Naive thymus-derived CD4-positive, alpha-beta T cell (primary cell): ENCODE measurements at regions of chr12 and their contacts with region 1.

Region 1: DNA sequence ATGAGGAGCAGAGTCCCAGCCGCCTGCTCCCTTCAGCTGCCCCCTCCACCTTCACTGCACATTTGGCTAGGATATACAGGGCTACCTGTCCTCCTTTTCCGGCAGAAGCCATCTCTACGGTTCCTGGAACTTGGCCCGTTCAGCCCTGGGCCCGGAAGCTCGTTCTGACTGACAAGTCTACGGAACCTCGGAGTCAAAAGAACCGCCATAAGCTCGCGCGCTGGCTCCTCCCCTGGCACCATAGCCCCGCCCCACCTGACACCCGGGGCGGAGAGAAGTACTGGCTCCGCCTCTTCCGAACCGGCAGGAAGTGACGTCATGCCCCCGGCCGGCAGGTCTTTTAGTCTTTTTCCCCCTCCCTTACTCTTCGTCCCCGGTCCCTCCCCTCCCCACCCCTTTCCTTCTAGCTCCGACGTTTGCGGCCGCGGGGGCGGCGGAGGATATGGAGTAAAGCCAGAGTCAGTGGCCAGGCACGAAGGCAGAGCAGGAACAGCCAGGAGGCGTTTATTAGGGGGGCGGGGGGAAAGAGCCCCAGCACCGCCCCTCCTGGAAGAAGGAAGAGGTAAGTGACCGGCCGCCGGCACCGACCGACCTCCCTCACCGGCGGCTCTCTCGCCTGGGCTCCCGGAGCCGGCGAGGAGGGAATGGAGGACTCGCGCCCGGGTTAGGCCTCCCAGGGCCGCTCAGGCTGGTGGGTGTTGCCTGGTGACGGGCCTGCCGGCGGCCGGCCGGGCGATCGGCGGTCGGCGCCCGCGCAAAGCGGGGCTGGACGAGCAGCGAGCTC is at the starts of genes DEPDC4 and SCYL2:
- DNase-seq: peak; percentile 94 to 99 (median 97)
- ATAC-seq: peak; percentile 95
- H3K4me3 ChIP-seq: peak within 1 kb of the TSS; percentile 98
- H3K4me3 Mint-ChIP-seq: peak within 1 kb of the TSS; percentile 94 to 100 (median 98)
- H3K27ac ChIP-seq: peak within 1 kb of the TSS; percentile 96
- H3K27ac Mint-ChIP-seq: peak within 1 kb of the TSS; percentile 89 to 100 (median 98)
- H3K4me1 ChIP-seq: peaks cover 11 to 19% of the 10 kb centered on the region in 2 donors
- H3K4me1 Mint-ChIP-seq: peaks cover 18 to 54% (median 33%) of the 10 kb centered on the region in 7 donors
- H3K27me3 ChIP-seq: no peaks in the 10 kb centered on the region
- H3K27me3 Mint-ChIP-seq: no peaks in the 10 kb centered on the region
- total RNA-seq, gene DEPDC4: 0.74 to 1.3 (median 0.92) TPM
- total RNA-seq, gene SCYL2: 32.6 to 49.4 (median 42.3) TPM

Region 2: GRCh38 chr12:100200463-100201181 is 66.4 kb before region 1 on chr12 and contains the start of gene ACTR6:
- CTCF ChIA-PET with region 1: no interaction called
- POLR2A ChIA-PET with region 1: interaction called, 23 read pairs
- intact Hi-C with region 1: loop called (anchors 1 kb)
- DNase-seq: peak; percentile 91 to 99 (median 97)
- ATAC-seq: peak; percentile 93
- H3K4me3 ChIP-seq: peak within 1 kb of the TSS; percentile 84
- H3K4me3 Mint-ChIP-seq: peak within 1 kb of the TSS; percentile 95 to 99 (median 98)
- H3K27ac ChIP-seq: peak within 1 kb of the TSS; percentile 95
- H3K27ac Mint-ChIP-seq: peak within 1 kb of the TSS; percentile 98 to 100 (median 99)
- H3K4me1 ChIP-seq: peaks cover 10 to 27% of the 10 kb centered on the region in 2 donors
- H3K4me1 Mint-ChIP-seq: peaks cover 17 to 56% (median 44%) of the 10 kb centered on the region in 7 donors
- H3K27me3 ChIP-seq: no peaks in the 10 kb centered on the region
- H3K27me3 Mint-ChIP-seq: no peaks in the 10 kb centered on the region
- total RNA-seq, gene ACTR6: 24.1 to 46.8 (median 34.6) TPM

Region 3: DNA sequence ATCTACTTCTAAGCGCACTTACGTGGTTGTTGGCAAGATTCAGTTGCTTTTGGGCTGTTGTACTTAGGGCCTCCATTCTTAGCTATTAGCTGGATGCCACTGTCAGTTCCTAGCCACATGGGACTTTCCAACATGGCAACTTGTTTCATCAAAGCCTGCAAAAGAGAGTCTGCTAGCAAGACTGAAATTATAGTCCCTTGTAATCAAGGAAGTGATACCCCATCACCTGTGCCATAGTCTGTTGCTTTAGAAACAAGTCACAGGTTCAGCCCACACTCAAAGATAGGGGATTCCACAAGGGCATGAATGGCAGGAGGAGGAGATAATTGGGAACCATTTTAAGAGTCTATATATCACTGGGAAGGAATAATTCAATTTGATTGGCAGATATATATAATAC is 62.8 kb after region 1 on chr12:
- CTCF ChIA-PET with region 1: no interaction called
- POLR2A ChIA-PET with region 1: interaction called, 4 read pairs
- intact Hi-C with region 1: loop called in 1 of 2 experiments (anchors 5 kb)
- DNase-seq: no peak
- ATAC-seq: no peak
- H3K4me3 ChIP-seq: no peak overlapping the region
- H3K4me3 Mint-ChIP-seq: no peak overlapping the region
- H3K27ac ChIP-seq: no peak overlapping the region
- H3K27ac Mint-ChIP-seq: no peak overlapping the region
- H3K4me1 ChIP-seq: no peaks in the 10 kb centered on the region
- H3K4me1 Mint-ChIP-seq: peaks cover 0 to 12% (median 0%) of the 10 kb centered on the region in 7 donors
- H3K27me3 ChIP-seq: no peaks in the 10 kb centered on the region
- H3K27me3 Mint-ChIP-seq: no peaks in the 10 kb centered on the region

Region 4: GRCh38 chr12:100573292-100574186 is 306.5 kb after region 1 on chr12 and contains the start of gene GAS2L3:
- CTCF ChIA-PET with region 1: no interaction called
- POLR2A ChIA-PET with region 1: no interaction called
- intact Hi-C with region 1: loop called in 1 of 2 experiments (anchors 1 kb)
- DNase-seq: peak in 8 of 9 donors; percentile 5 to 80 (median 22)
- ATAC-seq: peak; percentile 91
- H3K4me3 ChIP-seq: peak within 1 kb of the TSS; percentile 65
- H3K4me3 Mint-ChIP-seq: peak within 1 kb of the TSS; percentile 80 to 93 (median 90)
- H3K27ac ChIP-seq: no peak within 1 kb of the TSS
- H3K27ac Mint-ChIP-seq: peak within 1 kb of the TSS in 1 of 9 donors; percentile 87
- H3K4me1 ChIP-seq: peaks cover 0 to 4% of the 10 kb centered on the region in 2 donors
- H3K4me1 Mint-ChIP-seq: peaks cover 7 to 15% (median 11%) of the 10 kb centered on the region in 7 donors
- H3K27me3 ChIP-seq: no peaks in the 10 kb centered on the region
- H3K27me3 Mint-ChIP-seq: peaks cover 15 to 44% (median 30%) of the 10 kb centered on the region in 5 donors
- total RNA-seq, gene GAS2L3: 0.08 to 4.9 (median 0.16) TPM

Region 5: DNA sequence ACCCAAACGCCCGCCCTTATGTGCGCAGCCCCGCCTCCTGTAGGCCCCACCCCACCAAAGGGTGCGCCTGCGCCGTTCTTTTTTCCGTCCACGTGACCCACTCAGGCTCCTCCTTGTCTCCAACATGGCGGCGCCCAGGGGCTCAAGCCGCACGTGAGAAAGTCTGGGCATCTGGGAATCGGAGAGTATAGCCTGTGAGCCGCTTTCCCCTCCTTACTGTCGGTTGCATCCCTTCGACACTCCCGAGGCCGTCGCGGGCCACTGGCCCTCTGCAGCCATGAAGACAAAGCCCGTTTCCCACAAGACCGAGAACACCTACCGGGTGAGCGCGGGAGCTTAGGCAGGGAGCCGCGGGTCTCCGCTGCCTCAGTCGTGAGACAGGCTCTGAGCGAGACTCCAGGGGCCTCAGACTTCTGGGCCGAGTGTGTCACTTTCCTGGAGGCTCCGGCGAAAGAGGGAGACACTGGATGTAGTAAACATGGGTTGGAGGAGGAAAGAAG is 1013.0 kb after region 1 on chr12 and contains the start of gene UTP20:
- CTCF ChIA-PET with region 1: no interaction called
- POLR2A ChIA-PET with region 1: interaction called, 3 read pairs
- intact Hi-C with region 1: loop called (anchors 1 to 2 kb)
- DNase-seq: peak; percentile 90 to 94 (median 92)
- ATAC-seq: peak; percentile 100
- H3K4me3 ChIP-seq: peak within 1 kb of the TSS; percentile 72
- H3K4me3 Mint-ChIP-seq: peak within 1 kb of the TSS; percentile 92 to 97 (median 96)
- H3K27ac ChIP-seq: peak within 1 kb of the TSS; percentile 63
- H3K27ac Mint-ChIP-seq: peak within 1 kb of the TSS; percentile 77 to 94 (median 87)
- H3K4me1 ChIP-seq: peaks cover 5% of the 10 kb centered on the region in 2 donors
- H3K4me1 Mint-ChIP-seq: peaks cover 11 to 28% (median 16%) of the 10 kb centered on the region in 7 donors
- H3K27me3 ChIP-seq: no peaks in the 10 kb centered on the region
- H3K27me3 Mint-ChIP-seq: peaks cover 8 to 24% (median 16%) of the 10 kb centered on the region in 5 donors
- total RNA-seq, gene UTP20: 10.8 to 20.8 (median 14.9) TPM

Region 6: GRCh38 chr12:101407436-101408345 is 1140.7 kb after region 1 on chr12 and contains the start of gene ARL1:
- CTCF ChIA-PET with region 1: no interaction called
- POLR2A ChIA-PET with region 1: no interaction called
- intact Hi-C with region 1: loop called in 1 of 2 experiments (anchors 1 kb)
- DNase-seq: peak; percentile 41 to 85 (median 65)
- ATAC-seq: peak; percentile 88
- H3K4me3 ChIP-seq: peak within 1 kb of the TSS; percentile 97
- H3K4me3 Mint-ChIP-seq: peak within 1 kb of the TSS; percentile 92 to 99 (median 98)
- H3K27ac ChIP-seq: peak within 1 kb of the TSS; percentile 85
- H3K27ac Mint-ChIP-seq: peak within 1 kb of the TSS; percentile 82 to 98 (median 95)
- H3K4me1 ChIP-seq: peaks cover 0 to 15% of the 10 kb centered on the region in 2 donors
- H3K4me1 Mint-ChIP-seq: peaks cover 16 to 45% (median 30%) of the 10 kb centered on the region in 7 donors
- H3K27me3 ChIP-seq: no peaks in the 10 kb centered on the region
- H3K27me3 Mint-ChIP-seq: peaks cover 0 to 11% (median 2%) of the 10 kb centered on the region in 5 donors
- total RNA-seq, gene ARL1: 26.2 to 48.4 (median 39.3) TPM

Region 7: DNA sequence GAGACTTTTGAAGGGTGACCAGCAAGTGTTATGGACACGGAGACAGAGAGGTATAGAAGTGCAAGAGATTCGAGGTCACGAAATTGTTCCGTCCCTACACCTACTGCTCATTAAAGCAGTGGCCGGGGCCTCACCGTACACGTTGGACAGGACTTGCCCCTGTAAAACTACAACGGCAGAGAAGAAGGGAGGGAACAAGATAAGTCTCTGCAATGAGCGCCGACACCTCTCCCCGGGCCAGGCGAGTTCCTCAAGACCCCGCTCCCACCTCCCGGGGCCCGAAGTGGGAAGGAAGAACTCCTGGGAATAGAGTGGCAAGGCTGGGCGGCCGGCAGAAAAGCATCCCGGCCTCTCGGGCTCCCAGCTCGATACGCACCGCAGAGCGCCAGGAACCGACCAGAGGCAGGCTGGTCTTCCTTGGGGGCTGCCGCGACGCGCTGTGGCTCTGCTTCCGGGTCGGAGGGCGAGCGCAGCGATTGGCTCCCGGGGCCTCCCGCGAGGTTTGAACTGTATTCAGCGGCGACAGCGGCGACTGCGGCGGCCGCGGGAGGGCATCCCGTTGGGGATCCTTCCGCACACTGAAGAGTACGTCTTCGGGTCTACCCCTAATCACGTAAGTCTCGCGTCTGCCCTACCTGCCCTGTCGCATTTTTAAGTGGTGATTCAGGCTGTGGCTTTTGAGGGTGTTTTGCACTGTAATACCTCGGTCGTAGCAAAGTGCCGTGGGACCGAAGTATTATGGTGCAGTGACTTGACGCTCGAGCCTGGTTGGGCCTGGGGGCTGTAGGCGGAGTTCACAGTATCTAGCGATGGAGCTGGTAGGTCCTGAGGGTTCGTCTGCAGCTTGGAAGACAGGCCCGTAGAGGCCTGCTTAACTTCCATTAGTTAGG is 1852.9 kb after region 1 on chr12 and contains the starts of genes NUP37 and PARPBP:
- CTCF ChIA-PET with region 1: no interaction called
- POLR2A ChIA-PET with region 1: no interaction called
- intact Hi-C with region 1: loop called in 1 of 2 experiments (anchors 1 kb)
- DNase-seq: peak; percentile 87 to 94 (median 91)
- ATAC-seq: peak; percentile 98
- H3K4me3 ChIP-seq: peak within 1 kb of the TSS; percentile 93
- H3K4me3 Mint-ChIP-seq: peak within 1 kb of the TSS; percentile 88 to 98 (median 93)
- H3K27ac ChIP-seq: peak within 1 kb of the TSS; percentile 91
- H3K27ac Mint-ChIP-seq: peak within 1 kb of the TSS; percentile 86 to 97 (median 92)
- H3K4me1 ChIP-seq: peaks cover 9 to 14% of the 10 kb centered on the region in 2 donors
- H3K4me1 Mint-ChIP-seq: peaks cover 14 to 49% (median 27%) of the 10 kb centered on the region in 7 donors
- H3K27me3 ChIP-seq: no peaks in the 10 kb centered on the region
- H3K27me3 Mint-ChIP-seq: no peaks in the 10 kb centered on the region
- total RNA-seq, gene NUP37: 11.9 to 47.5 (median 18.5) TPM
- total RNA-seq, gene PARPBP: 1.1 to 21.5 (median 1.5) TPM